ENCODE measurements at regions of chr12 and their contacts with region 1.

Region 1: DNA sequence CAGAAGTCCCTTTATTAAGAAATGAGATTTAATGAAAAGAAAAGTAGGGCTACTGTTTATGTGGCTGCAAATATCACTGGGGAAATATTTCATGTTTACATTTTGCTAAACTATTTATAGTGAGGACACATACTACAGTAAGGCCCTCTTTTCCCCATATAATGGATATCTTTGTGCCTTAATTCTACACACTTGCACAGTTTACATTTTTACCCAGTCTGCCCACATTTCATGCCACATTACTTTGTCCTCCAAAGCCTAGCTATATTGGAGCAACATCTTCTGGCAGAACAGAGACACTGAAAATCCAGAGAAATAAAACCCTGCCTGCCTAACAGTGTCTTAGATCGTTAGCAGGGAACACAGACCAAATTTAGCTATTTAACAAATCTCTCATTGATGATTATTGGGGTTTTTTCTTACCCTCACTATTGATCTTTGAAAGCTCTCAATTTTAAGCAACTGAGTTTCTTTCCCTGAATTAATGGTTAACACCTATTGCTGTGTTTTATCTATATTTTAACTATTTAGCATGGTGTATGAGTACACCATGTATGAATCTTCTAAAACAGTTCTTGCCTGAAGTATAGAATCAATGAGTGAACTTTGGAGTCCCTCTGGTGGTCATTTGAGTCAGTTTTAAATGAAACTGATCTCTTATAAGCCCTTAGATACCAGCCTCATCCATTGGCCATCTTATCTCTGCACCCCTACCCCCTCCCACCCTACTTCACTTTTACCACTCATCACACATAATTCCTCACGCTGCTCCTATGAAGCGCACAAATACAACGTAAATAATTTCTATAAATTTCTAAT is 170.2 kb downstream of the BCAT1 start:
- ATAC-seq: peak; percentile 41 to 72 (median 54)
- H3K4me3 ChIP-seq: no peak overlapping the region
- H3K27ac ChIP-seq: no peak overlapping the region
- H3K4me1 ChIP-seq: no peaks in the 10 kb centered on the region

Region 2: DNA sequence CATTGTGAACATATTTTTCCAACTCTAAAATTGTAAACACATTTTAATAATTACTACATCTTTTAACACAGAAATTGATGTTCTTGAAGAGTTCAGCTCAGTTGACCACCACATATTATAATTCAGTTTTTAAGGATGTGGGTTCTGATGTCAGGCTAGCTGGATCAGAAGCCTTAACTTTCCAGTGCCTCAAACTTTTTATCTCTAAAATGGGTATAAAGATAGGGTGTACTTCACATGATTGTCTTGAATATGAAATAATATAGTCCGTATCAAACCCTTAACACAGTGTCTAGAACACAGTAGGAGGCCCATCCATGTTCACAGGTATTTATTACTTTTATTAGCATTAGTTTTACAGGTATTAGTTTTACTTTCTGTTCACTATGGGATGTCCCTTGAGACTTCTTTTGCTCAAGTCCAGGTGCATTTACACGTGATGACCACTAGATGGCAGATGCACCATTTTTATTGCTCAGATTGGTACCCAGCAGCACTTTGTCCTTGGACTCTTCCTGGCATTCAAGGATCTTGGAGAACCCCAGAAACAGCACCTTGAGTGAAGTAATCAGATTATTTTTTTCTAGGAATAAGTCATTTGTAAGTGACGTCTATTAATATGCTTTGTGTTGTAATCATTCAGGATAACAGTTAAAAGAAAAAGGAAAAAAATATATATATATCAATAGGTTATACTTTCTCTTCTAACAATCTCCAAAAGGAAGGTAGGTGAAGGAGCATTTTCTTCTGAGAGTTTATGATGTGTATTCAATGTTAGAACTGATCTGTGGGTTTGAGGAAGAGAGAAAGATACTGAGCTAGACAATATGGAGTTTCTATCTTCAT is 1573.5 kb before region 1 on chr12:
- in situ Hi-C with region 1: loop called in 1 of 9 experiments (anchors 25 kb)
- ATAC-seq: peak in 6 of 8 experiments; percentile 16 to 76 (median 59)
- H3K4me3 ChIP-seq: no peak overlapping the region
- H3K27ac ChIP-seq: no peak overlapping the region
- H3K4me1 ChIP-seq: no peaks in the 10 kb centered on the region

Region 3: DNA sequence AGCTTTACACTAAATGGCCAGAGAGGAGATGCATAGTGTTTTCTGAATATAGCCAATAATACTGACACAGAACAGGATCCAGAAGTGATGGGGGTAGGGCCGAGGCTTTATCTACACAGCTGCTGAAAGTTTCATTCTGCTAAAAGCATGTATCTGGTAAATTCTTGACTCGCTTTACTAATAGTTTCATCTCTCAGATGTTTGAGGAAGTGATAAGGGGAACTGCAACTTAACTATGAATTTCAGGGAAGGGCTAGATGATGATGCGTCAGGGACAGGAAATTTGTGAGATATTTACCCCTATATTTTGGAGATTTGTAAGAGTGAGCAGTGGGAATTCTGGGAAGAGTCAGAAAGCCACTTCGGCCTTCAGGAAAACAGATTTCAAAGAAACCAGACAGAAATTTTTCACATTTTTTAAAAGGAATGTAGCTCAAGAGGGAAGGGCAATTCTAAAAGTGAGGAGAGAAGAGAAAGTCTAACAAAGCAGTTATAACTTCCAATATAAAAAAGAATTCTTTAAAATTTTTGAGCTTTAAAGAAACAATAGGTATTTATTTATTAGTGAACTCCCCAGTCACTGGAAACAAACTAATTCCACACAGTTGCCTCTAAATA is 72.8 kb before region 1 on chr12:
- in situ Hi-C with region 1: no loop called
- ATAC-seq: no peak
- H3K4me3 ChIP-seq: no peak overlapping the region
- H3K27ac ChIP-seq: no peak overlapping the region
- H3K4me1 ChIP-seq: no peaks in the 10 kb centered on the region

Region 4: DNA sequence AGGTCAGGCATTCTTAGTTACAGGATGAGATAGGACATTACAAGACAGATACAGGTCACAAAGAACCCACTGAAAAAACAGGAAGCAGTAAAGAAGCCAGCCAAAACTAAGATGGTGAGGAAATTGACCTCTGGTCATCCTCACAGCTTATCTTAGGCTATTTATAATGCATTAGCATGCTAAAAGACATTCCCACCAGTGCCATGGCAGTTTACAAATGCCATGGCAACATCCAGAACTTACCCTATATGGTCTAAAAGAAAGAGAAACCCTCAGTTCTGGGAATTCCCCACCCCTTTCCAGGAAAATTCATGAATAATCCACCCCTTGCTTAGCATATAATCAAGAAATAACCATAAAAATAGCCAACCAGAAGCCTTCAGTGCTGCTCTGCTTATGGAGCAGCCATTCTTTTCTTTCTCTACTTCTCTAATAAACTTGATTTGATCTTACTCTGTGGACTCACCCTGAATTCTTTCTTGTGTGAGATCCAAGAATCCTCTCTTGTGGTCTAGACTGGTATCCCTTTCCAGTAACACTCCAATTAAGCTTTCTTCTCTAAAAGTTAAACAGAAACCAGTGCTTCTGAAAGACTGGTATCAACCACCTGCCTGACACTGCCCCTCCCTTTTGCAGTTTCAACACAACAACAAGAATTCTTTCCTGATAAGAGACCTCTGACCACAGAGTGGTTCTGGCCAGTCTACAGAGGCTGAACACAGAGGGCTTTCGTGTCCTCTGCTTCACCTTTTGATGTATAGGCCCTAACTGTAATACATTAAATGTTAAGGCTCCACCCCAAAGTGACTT is 83.3 kb after region 1 on chr12:
- in situ Hi-C with region 1: no loop called
- ATAC-seq: peak in 5 of 8 experiments; percentile 8 to 90 (median 80)
- H3K4me3 ChIP-seq: no peak overlapping the region
- H3K27ac ChIP-seq: peak overlapping the region in 1 of 2 donors; percentile 45
- H3K4me1 ChIP-seq: no peaks in the 10 kb centered on the region

Measured in motor neuron (in vitro differentiated cells).